Heart right ventricle (tissue), 16 donors: ENCODE measurements at regions of chr14 and their contacts with region 1.

Region 1: DNA sequence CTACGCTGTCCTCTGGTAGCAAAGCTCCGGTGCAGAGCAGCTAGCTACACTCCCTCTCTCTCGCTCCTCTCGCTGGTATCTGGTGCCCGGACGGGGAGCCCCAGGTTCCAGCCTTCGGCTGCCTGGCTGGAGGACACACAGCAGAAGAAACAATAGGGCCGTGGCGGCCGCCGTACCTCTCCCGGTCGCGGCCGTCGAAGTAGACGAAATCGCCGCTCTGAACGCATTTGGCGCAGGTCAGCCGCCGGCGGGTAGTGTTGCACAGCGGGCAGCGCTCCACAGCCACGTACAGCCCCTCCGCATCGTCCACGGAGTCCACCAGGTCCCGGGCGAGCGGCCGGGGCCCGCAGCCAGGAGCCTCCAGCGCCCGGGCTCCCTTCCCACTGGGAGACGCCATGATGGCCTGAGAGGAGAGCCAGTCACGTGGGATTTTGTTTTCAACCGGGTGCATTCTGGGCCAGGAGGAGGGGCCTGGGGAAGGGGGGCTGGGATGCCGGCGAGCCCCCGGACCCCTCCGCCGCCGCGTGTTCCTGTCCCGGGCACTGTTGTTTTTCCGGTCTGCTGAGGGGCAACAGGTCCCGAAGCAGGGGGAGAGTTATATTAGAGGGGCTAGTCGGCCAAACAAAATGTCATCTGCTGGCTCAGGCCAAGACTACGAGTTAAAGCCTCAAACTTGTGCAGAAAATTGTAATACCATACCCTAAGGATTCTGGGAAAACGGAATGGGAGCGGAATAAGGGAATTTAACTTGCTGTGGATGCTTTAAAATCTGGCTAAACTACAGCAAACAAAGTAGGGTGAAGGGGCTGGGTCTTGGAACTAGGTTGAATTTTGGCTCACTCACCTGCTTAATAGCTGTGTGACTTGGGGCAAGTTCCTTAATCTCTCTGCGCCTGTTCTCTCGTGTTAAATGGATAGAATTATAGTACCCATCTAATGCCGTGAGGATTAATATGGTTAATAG is at the start of gene ATG14:
- DNase-seq: peak; percentile 83 to 91
- ATAC-seq: peak; percentile 99 to 100 (median 99)
- H3K4me3 ChIP-seq: peak within 1 kb of the TSS; percentile 76 to 100 (median 92)
- H3K27ac ChIP-seq: peak within 1 kb of the TSS; percentile 48 to 93 (median 84)
- H3K4me1 ChIP-seq: peaks cover 0 to 33% (median 24%) of the 10 kb centered on the region in 9 donors
- H3K27me3 ChIP-seq: no peaks in the 10 kb centered on the region
- CTCF ChIP-seq: no peak
- total RNA-seq, gene ATG14: 8.9 to 18.1 (median 15.3) TPM

Region 2: DNA sequence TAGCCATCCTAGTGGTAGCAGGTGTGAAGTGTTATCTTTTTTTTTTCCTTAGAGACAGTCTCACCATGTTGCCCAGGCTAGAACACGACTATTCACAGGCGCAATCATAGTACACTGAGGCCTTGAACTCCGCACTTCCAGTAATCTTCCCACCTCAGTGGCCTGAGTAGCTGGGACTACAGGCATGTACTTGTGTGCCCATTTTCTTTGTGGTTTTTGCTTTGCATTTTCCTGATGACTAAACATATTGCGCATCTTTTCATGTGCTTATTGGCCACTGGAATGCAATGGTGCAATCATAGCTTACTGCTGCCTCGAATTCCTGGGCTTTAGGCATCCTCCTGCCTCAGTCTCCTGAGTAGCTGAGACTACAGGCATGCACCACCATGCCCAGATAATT is 475.8 kb before region 1 on chr14:
- intact Hi-C with region 1: no loop called
- DNase-seq: no peak
- ATAC-seq: no peak
- H3K4me3 ChIP-seq: no peak overlapping the region
- H3K27ac ChIP-seq: no peak overlapping the region
- H3K4me1 ChIP-seq: no peaks in the 10 kb centered on the region
- H3K27me3 ChIP-seq: no peaks in the 10 kb centered on the region
- CTCF ChIP-seq: no peak

Region 3: DNA sequence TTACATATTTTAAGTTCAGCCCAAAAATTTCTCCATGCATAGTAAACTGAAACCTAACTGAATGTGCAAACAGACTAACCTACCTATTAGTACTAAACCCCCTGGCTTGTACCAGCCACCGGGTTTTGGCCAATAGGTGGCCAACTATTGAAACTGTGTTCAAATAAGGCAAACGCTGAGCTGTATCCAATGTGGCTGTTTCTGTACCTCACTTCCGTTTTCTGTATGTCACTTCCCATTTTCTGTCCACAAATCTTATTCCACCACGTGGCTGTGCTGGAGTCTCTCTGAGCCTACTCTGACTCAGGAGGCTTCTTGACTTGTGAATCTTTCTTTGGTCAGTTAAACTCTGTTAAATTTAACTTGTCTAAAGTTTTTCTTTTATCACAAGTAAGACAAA is 146.5 kb before region 1 on chr14:
- intact Hi-C with region 1: loop called in 7 of 10 experiments (anchors 5 to 10 kb)
- DNase-seq: no peak
- ATAC-seq: no peak
- H3K4me3 ChIP-seq: no peak overlapping the region
- H3K27ac ChIP-seq: no peak overlapping the region
- H3K4me1 ChIP-seq: peaks cover 0 to 3% (median 0%) of the 10 kb centered on the region in 9 donors
- H3K27me3 ChIP-seq: no peaks in the 10 kb centered on the region
- CTCF ChIP-seq: no peak

Region 4: GRCh38 chr14:55270832-55271565 is 140.7 kb before region 1 on chr14 and contains the start of gene FBXO34:
- intact Hi-C with region 1: loop called in 7 of 10 experiments (anchors 5 to 10 kb)
- DNase-seq: peak; percentile 99 to 100
- ATAC-seq: peak; percentile 90 to 97 (median 94)
- H3K4me3 ChIP-seq: peak within 1 kb of the TSS; percentile 73 to 99 (median 96)
- H3K27ac ChIP-seq: peak within 1 kb of the TSS; percentile 76 to 97 (median 96)
- H3K4me1 ChIP-seq: peaks cover 0 to 39% (median 29%) of the 10 kb centered on the region in 9 donors
- H3K27me3 ChIP-seq: no peaks in the 10 kb centered on the region
- CTCF ChIP-seq: peak; percentile 99 to 100 (median 100)
- total RNA-seq, gene FBXO34: 16.9 to 26.2 (median 21.2) TPM